ENCODE measurements at regions of chr21 and their contacts with region 1.

Region 1: DNA sequence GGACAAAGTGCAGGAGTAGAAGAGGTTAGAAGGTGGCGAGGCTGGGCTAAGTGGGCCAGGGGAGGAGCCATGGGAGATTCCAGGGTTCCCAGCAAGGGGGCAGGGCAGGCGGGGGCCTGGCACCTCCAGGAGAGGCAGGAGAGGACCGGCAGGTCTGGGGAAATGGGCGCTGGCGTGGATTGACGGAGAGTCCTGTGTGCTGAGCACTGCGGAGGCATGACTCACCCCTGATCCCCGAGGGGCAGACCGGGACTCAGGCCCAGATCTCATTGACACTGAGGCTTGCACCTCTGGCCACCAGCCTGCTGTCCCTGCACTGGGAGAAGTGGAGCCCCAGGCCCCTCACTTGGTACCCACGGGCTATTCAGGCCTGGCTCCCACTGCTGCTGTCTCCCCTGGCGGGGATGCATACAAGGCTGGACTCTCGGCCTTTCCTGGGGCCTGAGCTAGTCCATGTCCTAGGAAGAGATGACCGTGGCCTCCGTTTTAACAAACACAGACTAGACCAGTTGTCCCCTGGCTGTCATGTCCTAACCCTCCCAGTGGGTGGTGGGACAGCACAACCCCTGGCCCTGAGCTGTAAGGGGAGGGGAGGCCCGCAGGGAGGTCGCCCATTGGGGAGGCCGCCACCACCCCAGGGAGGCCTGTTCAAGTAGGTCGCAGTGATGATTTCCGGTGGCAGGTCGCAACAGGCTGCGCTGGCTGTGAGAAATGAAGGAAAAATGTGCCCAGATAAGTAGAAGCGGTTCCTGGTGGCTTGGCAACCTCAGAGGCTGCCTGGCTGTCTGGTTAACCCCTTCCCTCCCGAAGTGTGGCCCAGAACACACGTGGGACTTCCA is 39.7 kb downstream of the RIPK4 start:
- DNase-seq: peak; percentile 86 to 96
- H3K4me3 ChIP-seq: no peak overlapping the region
- H3K27ac ChIP-seq: peak overlapping the region; percentile 87 to 88
- H3K4me1 ChIP-seq: peaks cover 6 to 32% (median 23%) of the 10 kb centered on the region in 4 donors
- H3K27me3 ChIP-seq: no peaks in the 10 kb centered on the region
- CTCF ChIP-seq: no peak

Region 2: DNA sequence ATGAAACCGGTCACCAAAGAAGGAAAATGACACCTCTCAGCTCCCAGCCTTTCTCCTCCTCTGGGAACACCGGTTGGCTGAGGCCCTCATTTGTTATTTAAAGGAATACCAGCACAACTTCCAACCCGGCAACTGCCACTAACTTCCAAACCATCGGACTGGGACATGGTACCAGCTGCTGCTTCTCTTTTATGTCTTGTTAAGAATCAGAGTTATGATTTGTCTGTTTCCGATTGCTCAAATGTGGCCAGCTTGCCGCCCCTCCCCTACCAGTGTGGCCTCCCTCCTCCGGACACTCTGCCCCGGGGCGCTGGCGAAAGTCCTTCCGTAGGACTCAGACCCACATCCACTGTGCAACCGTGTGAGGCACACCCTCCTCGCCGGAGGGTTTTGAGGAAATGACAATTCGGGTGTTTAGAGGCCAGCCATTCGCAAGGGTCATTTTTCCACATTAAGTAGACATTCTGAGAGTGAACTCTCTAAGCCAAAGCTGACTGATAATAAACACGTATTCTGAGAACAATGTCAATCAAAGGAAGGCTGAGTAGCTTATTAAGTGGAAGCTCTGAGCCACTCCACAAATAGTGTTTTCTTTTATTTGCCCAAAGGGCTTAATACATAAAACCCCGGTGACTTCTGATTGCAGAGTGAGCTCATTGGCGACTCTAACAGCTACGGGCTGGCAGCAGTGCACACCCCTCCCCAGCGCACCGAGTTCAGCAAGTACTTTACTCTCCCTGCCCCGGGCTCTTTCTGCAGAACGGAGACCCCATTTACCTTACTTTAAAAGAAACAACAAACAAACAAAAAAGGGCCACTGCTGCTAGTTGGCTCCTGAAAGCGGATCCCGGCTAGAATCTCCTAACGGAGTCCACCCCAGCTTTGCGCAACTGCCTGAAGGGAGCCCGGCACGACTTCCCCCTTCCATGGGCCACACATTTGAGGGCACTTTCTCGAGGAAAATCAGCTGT is 34.3 kb after region 1 on chr21:
- intact Hi-C with region 1: loop called (anchors 5 kb)
- DNase-seq: peak; percentile 70 to 81
- H3K4me3 ChIP-seq: peak overlapping the region; percentile 38 to 44
- H3K27ac ChIP-seq: peak overlapping the region; percentile 66 to 81
- H3K4me1 ChIP-seq: peaks cover 0 to 57% (median 31%) of the 10 kb centered on the region in 4 donors
- H3K27me3 ChIP-seq: peaks cover 0 to 3% of the 10 kb centered on the region in 2 donors
- CTCF ChIP-seq: no peak

Region 3: DNA sequence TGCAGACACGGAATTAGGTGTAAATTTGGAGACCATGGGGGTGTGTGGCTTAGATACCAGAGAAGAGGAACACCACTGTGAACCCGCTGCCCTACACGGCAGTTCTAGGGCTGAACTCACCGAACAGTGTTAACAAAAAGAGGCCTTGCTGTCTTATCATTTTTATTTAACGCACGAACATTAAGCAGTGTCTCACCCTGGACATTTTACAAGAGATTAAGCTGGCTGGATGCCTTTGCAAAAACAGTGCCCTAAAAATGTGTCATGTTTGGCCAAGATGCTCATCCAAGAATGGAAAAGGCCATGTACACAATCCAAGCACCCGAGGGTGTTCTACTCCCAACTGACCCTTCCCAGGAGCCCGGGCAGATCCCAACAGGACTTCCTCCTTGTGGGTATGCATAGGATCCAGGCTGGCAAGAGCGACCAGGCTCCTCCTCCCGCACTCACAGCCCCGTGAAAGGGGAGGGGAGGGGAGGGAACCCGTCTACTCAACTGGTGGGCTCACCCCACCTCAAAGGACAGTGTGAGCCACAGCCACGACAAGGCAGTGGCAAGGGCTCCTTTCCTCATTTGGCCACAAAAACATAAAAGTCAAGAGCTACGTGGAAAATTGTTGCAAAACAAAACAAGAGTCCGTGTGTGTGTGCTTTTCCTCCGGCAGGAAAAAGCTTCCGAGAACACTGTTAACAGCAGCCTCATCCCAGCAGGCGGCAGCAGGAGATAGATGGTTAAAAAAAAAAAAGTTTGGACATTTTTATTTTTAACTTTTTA is 206.3 kb after region 1 on chr21:
- intact Hi-C with region 1: no loop called
- DNase-seq: no peak
- H3K4me3 ChIP-seq: peak overlapping the region; percentile 33 to 45
- H3K27ac ChIP-seq: peak overlapping the region; percentile 69 to 80
- H3K4me1 ChIP-seq: peaks cover 0 to 41% (median 18%) of the 10 kb centered on the region in 4 donors
- H3K27me3 ChIP-seq: no peaks in the 10 kb centered on the region
- CTCF ChIP-seq: peak in 1 of 2 experiments; percentile 16

Measured in tibial artery (tissue), 4 donors.